Cardiac septum (tissue), 1 donor: ENCODE measurements at regions of chr10 and their contacts with region 1.

Region 1: DNA sequence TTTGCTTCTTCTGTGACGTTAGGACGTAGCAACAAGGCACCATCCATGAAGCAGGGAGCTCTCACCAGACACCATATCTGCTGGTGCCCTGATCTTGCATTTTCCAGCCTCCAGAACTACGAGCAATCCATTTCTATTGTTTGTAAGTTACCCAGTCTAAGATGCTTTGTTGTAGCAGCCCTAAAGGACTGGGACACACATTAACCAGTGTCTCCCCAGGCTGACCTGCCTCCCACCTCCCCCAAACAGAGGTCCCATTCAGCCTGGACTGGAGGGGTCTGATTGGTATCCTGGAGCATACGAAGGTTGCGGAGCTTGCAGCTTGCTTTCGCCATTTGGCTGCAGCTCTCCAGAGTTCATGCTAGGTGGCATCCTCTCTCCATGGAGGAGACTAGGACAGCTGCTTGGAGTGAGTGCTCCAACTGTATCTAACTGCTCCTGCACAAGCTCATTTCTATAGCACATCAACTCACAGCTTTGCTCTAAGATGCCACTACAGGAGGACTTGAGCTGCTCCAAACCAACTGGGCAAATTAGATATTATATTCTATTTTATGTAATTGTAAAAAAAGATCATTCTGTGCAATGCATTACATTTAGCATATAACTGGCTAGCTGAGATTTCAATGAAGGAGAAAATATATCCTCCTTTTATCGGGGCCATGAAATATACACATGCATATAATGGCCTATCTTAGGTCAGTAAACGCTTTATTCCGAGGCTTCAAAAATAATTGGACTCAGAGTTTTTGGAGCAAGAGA is 8.0 kb upstream of the GRK5 start:
- DNase-seq: no peak

Region 2: DNA sequence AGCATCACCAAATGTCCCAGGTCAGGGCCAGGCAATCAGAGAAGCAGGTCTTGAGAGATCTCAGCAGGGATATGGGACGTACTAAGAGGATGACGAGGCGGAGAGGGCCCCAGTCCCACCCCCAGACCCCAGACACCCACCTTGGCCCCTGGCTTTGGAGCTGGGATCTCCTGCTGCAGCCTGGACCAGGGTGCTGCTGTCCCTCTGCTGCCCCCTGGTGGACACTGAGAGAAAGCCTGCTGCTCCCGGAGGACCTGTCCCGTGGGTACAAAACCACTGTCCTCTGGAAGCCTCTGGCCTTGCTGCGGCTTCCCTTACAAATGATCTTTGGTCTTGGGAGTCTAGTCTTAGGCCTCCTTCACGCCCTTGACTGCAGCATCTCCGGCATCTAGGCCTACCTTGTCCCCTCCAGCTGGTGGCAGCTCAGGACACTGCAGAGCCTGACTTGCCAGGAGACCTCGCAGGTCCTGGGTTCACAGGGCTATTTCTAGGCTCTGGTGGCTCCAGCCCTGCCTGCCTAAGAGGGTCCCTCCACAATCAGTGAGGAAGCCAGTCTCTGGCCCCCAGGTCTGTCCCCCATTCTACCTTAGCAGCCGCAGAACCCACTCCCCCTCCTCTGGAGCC is 246.0 kb after region 1 on chr10:
- intact Hi-C with region 1: loop called (anchors 1 kb)
- DNase-seq: peak; percentile 95

Region 3: DNA sequence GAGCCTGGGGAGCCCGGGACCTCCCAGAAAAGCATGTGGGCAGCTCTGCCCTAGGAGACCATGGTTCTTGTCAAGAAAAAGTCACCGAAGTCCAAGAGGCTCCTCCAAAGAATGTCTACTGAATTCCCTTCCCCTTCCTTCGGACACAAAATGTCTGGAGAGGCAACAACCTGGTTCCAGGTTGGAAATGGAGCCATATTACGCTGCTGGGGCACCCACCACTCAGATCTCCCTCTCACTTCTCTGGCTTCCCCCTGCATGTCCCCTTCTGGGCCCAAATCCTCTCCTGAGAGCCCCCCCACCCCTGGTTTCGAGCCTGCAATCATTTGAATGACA is 290.5 kb after region 1 on chr10:
- intact Hi-C with region 1: loop called (anchors 2 kb)
- DNase-seq: no peak

Region 4: GRCh38 chr10:119542988-119543813 is 343.8 kb after region 1 on chr10:
- intact Hi-C with region 1: loop called (anchors 5 kb)
- DNase-seq: no peak